HCT116 (cell line): ENCODE measurements at regions of chr3 and their contacts with region 1.

Region 1: DNA sequence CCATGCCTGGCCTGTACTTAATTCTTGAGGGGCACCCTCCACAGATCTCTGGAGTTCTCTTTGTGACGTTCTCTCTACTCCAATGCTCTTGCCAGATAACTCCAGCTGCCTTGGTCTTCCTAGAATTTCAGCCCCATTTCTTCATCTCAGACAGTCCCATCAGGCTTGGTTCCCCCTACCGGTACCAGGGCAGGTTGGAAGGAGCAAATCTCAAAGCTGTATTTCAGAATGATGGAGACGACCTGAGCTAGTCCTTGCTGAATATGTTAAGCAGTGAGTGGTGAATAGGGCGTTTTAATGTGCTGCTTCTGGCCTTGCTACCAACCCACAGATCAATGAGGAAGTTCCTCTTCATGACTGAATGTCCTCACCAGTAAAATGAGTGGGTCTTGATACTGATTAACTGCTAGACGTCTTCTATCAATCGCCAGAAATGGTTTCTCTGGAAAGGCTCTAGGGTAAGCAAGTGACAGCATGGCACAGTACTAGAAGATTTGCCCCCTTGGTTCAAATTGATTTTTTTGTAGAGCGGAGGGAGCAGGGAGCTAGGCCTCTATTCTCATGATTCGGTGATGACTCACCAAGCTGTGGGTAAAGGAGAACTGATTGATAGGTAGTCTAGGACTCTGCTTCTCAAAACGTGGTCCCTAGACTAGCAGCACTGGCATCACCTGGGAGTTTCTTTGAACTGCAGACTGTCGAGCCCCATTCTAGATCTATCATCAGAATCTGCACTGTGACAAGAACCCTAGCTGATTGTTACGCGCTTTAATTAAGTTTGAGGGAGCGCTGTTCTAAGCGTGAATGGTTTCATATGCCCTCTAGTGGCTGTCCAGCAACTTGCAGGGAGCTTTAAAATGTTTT is 67.8 kb downstream of the UBP1 start:
- DNase-seq: peak; percentile 70
- ATAC-seq: peak; percentile 91
- H3K4me3 ChIP-seq: peak overlapping the region in 1 of 2 experiments; percentile 39; a peak in 2 of 4 replicates
- H3K27ac ChIP-seq: peak overlapping the region; percentile 6; the same call in 1 of the 2 replicates
- H3K4me1 ChIP-seq: peaks cover 4 to 15% of the 10 kb centered on the region in 2 experiments; a peak in 3 of 4 replicates
- H3K27me3 ChIP-seq: no peaks in the 10 kb centered on the region
- CTCF ChIP-seq: peak; percentile 88 to 98 (median 89)
- POLR2A ChIP-seq: no peak
- RAD21 ChIP-seq: peak; percentile 94

Region 2: DNA sequence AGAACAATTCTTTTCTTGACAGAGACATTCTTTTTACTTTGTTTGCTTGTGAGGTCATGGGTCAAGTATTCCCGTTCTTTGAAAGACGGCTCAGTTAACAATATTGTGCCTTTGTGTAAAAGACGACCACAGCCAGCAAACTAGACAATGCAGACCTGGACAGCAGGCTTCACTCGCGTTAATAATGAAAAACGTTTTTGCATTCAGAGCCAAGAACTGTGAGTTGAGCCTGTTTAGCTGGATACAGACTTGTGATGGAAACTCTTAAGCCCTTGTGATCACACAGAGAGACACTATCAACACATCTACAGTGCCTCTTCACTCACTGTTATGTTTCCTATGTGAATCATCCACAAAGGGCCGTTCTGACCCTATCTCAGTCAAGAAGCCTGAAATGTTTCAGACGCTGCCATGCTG is 1018.1 kb before region 1 on chr3:
- CTCF ChIA-PET with region 1: no interaction called
- POLR2A ChIA-PET with region 1: no interaction called
- RAD21 ChIA-PET with region 1: no interaction called
- intact Hi-C with region 1: no loop called
- DNase-seq: no peak
- ATAC-seq: no peak
- H3K4me3 ChIP-seq: no peak overlapping the region
- H3K27ac ChIP-seq: no peak overlapping the region
- H3K4me1 ChIP-seq: no peaks in the 10 kb centered on the region
- H3K27me3 ChIP-seq: no peaks in the 10 kb centered on the region
- CTCF ChIP-seq: no peak
- POLR2A ChIP-seq: no peak
- RAD21 ChIP-seq: no peak

Region 3: DNA sequence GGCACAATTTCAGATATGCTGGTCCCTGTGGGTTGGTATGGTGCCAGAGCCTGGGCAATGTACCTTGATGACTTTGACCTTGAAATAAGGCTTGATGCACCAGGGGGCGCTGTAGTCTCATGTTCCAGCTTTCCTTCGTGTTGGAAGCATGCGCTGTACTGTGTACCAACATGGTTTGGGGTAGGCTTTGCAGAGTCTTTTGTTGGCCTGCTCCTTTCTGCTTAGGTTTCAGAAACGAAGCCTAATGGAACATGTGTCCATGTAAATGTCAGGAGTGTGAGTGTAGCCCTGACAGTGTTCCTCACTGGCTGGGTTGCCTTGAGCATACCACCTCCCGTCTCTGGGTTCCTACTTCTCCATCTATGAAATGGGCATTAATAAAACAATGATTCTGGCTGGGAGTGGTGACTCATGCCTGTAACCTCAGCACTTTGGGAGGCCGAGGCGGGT is 424.6 kb before region 1 on chr3:
- CTCF ChIA-PET with region 1: interaction called, 26 read pairs
- POLR2A ChIA-PET with region 1: no interaction called
- RAD21 ChIA-PET with region 1: no interaction called
- intact Hi-C with region 1: loop called (anchors 1 kb)
- DNase-seq: peak; percentile 88
- ATAC-seq: peak; percentile 97
- H3K4me3 ChIP-seq: no peak overlapping the region
- H3K27ac ChIP-seq: no peak overlapping the region
- H3K4me1 ChIP-seq: peaks cover 0 to 14% of the 10 kb centered on the region in 2 experiments; a peak in 2 of 4 replicates
- H3K27me3 ChIP-seq: no peaks in the 10 kb centered on the region
- CTCF ChIP-seq: peak; percentile 79 to 88 (median 83)
- POLR2A ChIP-seq: no peak
- RAD21 ChIP-seq: peak; percentile 96

Region 4: DNA sequence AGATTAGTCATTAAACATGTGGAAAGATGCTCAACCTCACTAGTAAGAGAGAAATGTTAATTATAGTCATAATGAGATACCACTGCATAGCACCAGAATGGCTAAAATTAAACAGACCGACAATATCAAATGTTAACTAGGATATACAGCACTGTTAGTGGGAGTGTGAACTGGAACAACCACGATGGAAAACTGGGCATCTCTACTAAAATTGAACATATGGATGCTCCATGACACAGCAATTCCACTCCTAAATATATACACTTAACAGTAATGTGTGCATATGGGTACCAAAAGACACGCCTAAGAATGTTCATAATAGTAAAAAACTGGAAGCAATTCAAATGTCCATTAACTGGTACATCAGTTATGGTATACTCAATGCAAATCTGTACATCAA is 217.1 kb before region 1 on chr3:
- CTCF ChIA-PET with region 1: no interaction called
- POLR2A ChIA-PET with region 1: no interaction called
- RAD21 ChIA-PET with region 1: no interaction called
- intact Hi-C with region 1: no loop called
- DNase-seq: no peak
- ATAC-seq: no peak
- H3K4me3 ChIP-seq: no peak overlapping the region
- H3K27ac ChIP-seq: no peak overlapping the region
- H3K4me1 ChIP-seq: peaks cover 3 to 6% of the 10 kb centered on the region in 2 experiments; a peak in 1 of 4 replicates
- H3K27me3 ChIP-seq: no peaks in the 10 kb centered on the region
- CTCF ChIP-seq: no peak
- POLR2A ChIP-seq: no peak
- RAD21 ChIP-seq: no peak

Region 5: DNA sequence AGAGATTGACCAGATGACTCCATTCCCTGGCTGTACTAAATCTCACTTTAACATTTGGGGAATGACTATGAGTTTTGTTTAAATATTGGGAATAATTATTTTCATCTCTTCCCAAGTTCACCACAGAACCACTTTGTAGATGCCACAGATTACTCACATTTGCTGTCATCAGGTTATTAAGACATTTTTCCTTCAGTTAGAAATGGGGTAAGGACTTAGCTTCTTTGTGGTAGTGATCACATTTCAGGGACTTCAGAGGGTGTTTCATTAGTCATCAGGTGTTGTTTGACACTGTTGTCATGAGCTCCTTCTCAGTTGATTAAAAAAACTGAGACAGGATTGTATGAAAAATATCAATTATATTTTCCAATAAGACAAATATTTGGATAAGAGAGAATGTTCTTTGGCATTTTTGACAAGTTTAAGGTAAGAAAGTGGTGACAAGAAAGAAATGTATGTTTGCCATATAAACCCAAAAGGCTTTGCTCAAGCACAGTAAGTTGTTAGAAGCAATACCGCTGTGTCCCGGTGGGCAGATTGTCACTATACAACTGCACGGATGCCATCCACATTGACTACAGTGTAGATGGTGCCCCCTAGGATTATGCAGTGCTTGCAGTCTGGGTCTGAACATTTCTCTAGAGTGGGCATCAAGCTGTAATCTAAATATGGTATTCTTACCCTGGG is 72.9 kb before region 1 on chr3:
- CTCF ChIA-PET with region 1: interaction called, 12 read pairs
- POLR2A ChIA-PET with region 1: no interaction called
- RAD21 ChIA-PET with region 1: interaction called in 1 of 2 experiments, 4 read pairs
- intact Hi-C with region 1: no loop called
- DNase-seq: peak; percentile 90
- ATAC-seq: peak; percentile 85
- H3K4me3 ChIP-seq: peak overlapping the region; percentile 6 to 43; a peak in 3 of 4 replicates
- H3K27ac ChIP-seq: peak overlapping the region; percentile 68
- H3K4me1 ChIP-seq: peaks cover 26 to 40% of the 10 kb centered on the region in 2 experiments
- H3K27me3 ChIP-seq: no peaks in the 10 kb centered on the region
- CTCF ChIP-seq: no peak
- POLR2A ChIP-seq: no peak
- RAD21 ChIP-seq: no peak

Region 6: GRCh38 chr3:33334364-33334763 is 38.1 kb before region 1 on chr3:
- CTCF ChIA-PET with region 1: no interaction called
- POLR2A ChIA-PET with region 1: no interaction called
- RAD21 ChIA-PET with region 1: no interaction called
- intact Hi-C with region 1: no loop called
- DNase-seq: no peak
- ATAC-seq: no peak
- H3K4me3 ChIP-seq: no peak overlapping the region
- H3K27ac ChIP-seq: no peak overlapping the region
- H3K4me1 ChIP-seq: no peaks in the 10 kb centered on the region
- H3K27me3 ChIP-seq: no peaks in the 10 kb centered on the region
- CTCF ChIP-seq: no peak
- POLR2A ChIP-seq: no peak
- RAD21 ChIP-seq: no peak

Region 7: DNA sequence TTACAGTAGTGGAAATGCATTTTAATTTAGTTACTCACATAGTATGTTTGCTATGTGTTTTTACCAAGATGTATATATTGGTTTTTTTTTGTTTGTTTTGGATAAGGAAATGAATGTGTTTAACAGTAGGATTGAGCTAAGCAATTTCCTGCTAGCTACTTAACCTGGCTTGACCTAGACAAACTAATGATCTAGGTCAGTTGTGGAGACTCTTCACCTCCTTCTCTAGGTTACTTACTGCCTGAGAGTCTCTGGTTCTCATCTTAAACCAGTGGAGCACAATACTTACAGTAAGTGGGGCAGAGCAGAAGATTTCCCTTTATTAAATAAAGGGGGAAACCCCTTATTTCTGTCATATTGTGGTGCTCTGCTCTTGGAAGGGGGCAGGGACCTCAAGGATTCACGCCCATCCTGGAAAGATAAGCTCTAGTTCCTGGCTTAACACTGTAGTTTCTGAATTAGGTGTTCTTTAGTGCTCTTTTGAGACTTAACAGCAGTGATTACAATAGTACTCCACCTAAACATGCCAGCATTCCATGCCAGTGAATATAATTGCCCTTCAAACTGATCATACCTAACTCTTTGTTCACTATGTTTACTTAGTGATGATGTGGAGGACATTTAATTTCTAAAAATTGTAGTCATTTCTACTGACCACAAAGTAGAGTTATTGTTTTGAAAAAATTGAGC is 12.2 kb before region 1 on chr3:
- CTCF ChIA-PET with region 1: interaction called, 24 read pairs
- POLR2A ChIA-PET with region 1: no interaction called
- RAD21 ChIA-PET with region 1: no interaction called
- intact Hi-C with region 1: no loop called
- DNase-seq: peak; percentile 54
- ATAC-seq: peak; percentile 75
- H3K4me3 ChIP-seq: peak overlapping the region in 1 of 2 experiments; percentile 17; a peak in 2 of 4 replicates
- H3K27ac ChIP-seq: peak overlapping the region; percentile 28; the same call in 1 of the 2 replicates
- H3K4me1 ChIP-seq: peaks cover 26 to 56% of the 10 kb centered on the region in 2 experiments
- H3K27me3 ChIP-seq: no peaks in the 10 kb centered on the region
- CTCF ChIP-seq: no peak
- POLR2A ChIP-seq: no peak
- RAD21 ChIP-seq: no peak